ENCODE measurements at regions of chr19 and their contacts with region 1.

Region 1: DNA sequence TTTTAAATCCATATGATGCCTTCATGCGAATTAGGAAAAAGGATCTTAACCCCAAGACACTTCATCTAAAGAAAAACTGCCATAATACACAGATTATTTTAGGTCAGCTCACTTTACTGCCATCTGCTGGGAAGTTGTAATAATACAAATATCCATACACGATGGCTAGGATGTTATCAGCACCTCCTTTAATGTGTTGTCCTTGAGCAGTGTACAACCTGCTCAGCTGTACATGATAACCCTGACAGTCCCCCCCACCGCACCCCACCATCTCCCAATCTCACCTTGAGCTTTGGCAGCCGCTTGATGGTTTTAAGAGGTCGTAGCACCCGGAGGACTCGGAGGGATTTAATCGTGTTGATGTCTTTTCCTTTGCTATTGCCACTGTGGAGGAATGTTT is 112.2 kb downstream of the IER2 start:
- DNase-seq: no peak

Region 2: GRCh38 chr19:12983542-12984142 is 278.8 kb before region 1 on chr19:
- intact Hi-C with region 1: loop called (anchors 2 kb)
- DNase-seq: peak; percentile 90

Region 3: DNA sequence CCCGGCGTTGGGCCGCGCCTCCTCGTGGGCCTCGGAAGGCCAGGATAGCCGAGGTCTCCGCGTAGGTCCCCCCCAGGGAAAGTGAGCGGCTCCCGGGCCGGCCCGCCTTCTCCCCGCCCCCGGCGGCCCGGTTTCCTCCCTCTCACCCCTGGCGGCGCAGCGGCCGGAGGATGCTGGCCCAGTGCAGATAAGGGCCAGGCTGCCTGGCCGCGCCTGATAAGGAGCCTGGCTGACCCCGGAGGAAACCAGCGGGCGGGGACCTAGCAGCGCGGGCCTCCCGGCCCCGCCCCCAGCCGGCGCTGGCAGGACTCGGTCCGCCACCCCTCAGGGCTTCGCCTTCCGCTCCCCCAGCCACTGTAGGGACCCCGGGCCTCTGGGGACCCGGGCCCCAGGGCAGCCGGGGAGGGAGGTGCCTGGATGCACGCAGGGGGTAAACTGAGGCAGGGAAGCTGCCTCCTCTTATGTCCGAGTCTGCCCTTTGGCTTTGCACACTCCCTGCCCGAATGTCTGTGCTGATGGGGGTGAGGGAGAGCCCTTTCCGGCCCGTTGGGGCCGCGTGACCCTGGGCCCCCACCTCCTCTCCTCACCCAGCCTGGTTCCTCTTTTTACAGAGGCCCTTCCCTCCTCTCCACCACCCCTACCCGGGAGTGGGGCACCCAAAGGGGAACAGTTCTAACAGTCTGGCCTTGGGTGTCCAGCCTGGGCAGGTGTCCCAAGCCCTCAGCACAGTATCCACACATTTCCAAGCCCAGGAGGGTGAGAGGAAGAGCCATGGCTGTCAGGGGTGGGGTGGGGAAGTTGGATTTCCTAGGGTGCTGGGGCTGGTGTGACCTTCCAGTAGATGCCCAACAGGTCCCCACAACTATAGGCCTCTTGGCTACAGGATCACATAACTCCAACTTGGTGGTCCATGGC is 159.5 kb before region 1 on chr19 and contains the start of gene LYL1:
- intact Hi-C with region 1: loop called (anchors 2 kb)
- DNase-seq: peak; percentile 96
- total RNA-seq, gene LYL1: 9.4 TPM

Region 4: GRCh38 chr19:13190781-13191540 is 71.5 kb before region 1 on chr19:
- intact Hi-C with region 1: loop called (anchors 5 kb)
- DNase-seq: no peak

Region 5: GRCh38 chr19:13207846-13208671 is 54.4 kb before region 1 on chr19:
- intact Hi-C with region 1: loop called (anchors 5 kb)
- DNase-seq: peak; percentile 78

Measured in cardiac septum (tissue), 1 donor.